ENCODE measurements at regions of chr10 and their contacts with region 1.

Region 1: DNA sequence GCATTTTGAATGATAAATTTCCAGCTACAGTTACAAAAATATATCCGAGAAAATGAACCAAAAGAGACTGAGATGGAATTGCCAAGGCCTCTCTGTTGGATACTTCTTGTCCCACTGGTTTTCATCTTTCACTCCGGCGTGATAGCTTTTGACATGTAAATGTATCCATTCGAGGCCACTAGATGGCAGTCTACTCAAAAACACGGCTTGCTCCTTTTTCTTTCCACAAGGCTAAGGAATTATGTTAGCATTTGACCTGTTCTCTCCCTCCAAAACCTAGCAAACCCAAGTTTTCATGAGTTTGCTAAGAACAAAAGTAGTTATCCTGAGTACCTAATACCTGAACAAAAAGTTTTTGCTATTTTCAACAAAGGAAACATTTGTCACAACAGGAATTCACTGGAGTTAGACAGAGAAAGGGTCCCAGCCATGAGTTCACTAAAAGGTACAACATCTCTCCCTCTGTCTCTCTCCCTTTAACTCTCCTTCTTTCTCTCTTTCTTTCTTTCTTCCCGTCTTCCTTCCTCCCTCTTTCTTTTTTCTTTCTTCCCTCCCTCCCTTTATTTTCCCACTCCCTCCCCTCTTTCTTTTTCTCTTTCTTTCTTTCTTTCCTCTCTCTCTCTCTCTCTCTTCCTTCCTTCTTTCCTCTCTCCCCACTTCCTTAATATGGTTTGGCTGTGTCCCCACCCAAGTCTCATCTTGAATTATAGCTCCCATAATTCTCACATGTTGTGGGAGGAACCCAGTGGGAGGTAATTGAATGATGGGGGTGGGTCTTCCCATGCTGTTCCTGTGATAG is 207.9 kb upstream of the MYO3A start:
- DNase-seq: no peak

Region 2: DNA sequence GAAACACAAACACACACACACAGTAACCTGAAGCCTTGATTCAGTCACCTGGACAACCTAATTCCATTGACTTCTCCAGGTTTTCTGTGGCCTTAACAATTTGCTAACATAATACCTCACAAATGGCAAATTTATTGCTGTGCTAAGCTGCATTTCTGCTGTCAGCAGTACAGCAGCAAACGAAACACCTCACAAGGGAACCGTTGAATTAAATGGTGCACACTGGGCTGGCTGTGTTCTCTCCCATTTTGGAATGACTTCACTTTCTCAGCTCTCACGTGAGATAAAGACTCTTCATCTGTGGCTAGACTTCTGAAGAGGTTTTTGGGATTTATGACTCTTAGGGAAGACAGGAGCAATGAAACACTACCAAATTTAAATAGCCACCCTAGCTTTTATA is 398.8 kb before region 1 on chr10:
- intact Hi-C with region 1: no loop called
- DNase-seq: no peak

Region 3: DNA sequence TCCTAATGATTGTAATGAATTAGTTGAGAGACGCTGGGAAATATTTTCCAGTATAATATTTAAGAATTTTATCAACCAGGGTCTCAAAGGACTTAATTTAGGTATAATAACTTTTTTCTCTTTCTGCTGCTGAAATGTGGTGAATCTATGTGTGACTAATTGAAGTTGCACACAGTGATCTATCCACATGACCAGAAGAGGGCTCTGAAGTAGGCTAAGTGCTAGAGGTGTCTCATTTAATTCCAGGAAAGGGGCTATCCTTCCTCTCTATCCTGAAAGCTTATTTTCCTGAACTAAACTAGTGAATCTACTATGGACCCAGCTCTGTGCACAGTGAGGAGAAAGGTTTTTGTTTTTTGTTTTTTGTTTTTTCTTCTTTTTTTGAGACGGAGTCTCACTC is 86.5 kb before region 1 on chr10:
- intact Hi-C with region 1: loop called in 1 of 2 experiments (anchors 2 kb)
- DNase-seq: no peak

Region 4: GRCh38 chr10:26296355-26296754 is 570.2 kb after region 1 on chr10:
- intact Hi-C with region 1: no loop called
- DNase-seq: no peak